GM13976 (cell line): ENCODE measurements at regions of chr1 and their contacts with region 1.

Region 1: GRCh38 chr1:7042322-7043190 is 257.3 kb downstream of the CAMTA1 start:
- DNase-seq: peak; percentile 79
- CTCF ChIP-seq: peak; percentile 33

Region 2: DNA sequence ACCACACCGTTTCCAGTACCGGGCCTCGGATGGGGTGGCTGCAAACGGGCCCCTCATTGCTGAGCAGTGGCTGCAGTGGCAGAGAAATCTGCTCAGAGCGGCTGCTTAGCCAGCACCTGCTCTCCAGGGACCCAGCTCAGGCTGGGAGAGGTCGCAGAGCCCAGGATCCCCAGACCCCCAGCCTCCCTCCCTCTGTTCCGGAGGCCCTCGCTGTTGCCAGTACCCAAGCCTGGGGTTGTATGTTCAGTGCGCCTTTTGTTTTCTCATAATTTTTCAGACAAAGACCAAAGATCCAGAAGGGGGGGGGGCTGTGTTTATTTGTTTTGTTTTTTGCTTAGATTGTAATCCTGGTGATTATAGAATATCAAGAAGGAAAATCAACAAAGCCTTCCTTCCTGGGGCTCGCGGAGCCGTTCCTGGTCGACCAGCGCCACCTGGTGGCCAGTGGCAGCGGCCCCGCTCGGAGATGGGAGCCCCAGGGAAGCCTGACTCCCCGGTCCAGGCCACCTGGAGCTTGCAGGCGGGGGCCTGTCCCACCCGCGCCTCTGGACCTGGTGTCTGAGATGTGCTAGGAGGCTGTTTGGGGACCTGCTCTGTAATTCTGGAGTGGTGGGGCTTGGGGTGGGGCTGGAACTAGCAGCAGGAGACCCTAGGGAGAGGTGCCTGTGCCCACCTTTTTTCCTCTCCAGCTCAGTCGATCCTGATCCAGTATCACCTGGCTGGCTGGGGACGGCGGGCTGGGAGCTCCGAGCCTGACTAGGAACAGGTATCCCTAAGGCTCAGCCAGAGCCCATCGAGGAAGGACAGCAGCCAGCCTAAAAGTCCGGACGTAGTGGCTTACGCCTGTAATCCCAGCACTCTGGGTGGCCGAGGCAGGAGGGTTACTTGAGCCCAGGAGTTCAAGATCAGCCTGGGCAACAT is 604.7 kb after region 1 on chr1:
- in situ Hi-C with region 1: loop called (anchors 25 kb)
- DNase-seq: peak; percentile 93
- CTCF ChIP-seq: peak; percentile 91